OCI-LY7 (cell line): ENCODE measurements at regions of chr18 and their contacts with region 1.

Region 1: GRCh38 chr18:29154758-29155725 is 978.1 kb upstream of the CDH2 start:
- DNase-seq: no peak
- H3K4me3 ChIP-seq: no peak overlapping the region
- H3K27ac ChIP-seq: no peak overlapping the region
- H3K4me1 ChIP-seq: no peaks in the 10 kb centered on the region
- CTCF ChIP-seq: no peak

Region 2: GRCh38 chr18:29218091-29218490 is 63.0 kb after region 1 on chr18:
- CTCF ChIA-PET with region 1: no interaction called
- POLR2A ChIA-PET with region 1: no interaction called
- intact Hi-C with region 1: loop called (anchors 10 kb)
- DNase-seq: no peak
- H3K4me3 ChIP-seq: no peak overlapping the region
- H3K27ac ChIP-seq: no peak overlapping the region
- H3K4me1 ChIP-seq: no peaks in the 10 kb centered on the region
- CTCF ChIP-seq: no peak

Region 3: DNA sequence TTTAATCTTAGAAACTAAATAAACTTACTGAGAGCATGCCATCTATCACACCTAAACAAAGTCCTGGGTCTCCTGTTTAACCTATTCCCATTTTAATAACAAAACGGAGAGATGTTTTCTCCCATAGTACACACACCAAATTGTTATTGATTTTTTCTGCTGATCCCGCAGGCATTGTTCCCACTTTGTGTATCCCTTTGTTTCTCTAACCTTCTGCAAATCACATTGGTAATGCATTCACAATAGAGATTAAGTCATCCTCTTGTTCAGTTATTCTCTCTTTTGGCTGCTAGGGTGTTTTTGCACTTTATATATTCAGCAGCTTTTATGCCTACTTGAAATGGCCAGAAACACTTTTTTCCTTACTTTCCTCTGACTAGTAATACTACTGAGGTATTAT is 93.8 kb after region 1 on chr18:
- CTCF ChIA-PET with region 1: no interaction called
- POLR2A ChIA-PET with region 1: no interaction called
- intact Hi-C with region 1: loop called (anchors 10 kb)
- DNase-seq: no peak
- H3K4me3 ChIP-seq: no peak overlapping the region
- H3K27ac ChIP-seq: no peak overlapping the region
- H3K4me1 ChIP-seq: no peaks in the 10 kb centered on the region
- CTCF ChIP-seq: no peak